Endothelial cell of umbilical vein (primary cell): ENCODE measurements at regions of chr2 and their contacts with region 1.

Region 1: DNA sequence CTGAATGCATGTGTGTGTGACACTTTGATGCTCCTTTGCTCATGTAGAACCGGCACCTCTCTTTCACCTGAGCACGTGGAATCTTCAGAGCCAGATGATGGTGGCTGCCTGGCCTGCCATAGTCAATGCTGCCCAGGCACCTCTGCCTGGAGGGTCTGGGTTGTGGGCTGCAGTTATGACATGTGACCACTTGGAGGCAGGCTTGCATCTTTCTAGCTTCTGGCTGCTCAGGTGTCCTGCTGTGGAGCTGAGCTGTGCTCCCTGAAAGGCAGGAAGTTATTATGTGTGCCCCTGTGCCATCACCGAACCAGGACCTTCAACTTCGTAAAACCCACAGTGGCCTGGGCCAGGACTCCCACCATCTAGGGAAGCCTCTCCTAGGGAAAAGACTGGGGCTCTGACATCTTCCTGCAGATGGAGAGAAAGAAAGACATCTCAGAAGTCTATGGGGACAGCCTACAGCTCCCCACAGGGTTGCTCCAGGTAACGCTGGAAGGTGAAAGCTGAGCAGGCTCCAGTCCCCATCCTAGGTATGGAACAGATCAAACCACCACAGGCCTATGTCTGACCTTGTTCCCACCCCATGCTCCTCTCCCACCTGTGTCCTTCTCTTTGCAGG is 30.2 kb downstream of the PSD4 start:
- DNase-seq: peak; percentile 64
- H3K4me3 ChIP-seq: no peak overlapping the region
- H3K27ac ChIP-seq: no peak overlapping the region
- H3K4me1 ChIP-seq: peaks cover 2% of the 10 kb centered on the region
- H3K27me3 ChIP-seq: no peaks in the 10 kb centered on the region
- CTCF ChIP-seq: peak; percentile 81 to 88
- POLR2A ChIP-seq: no peak

Region 2: DNA sequence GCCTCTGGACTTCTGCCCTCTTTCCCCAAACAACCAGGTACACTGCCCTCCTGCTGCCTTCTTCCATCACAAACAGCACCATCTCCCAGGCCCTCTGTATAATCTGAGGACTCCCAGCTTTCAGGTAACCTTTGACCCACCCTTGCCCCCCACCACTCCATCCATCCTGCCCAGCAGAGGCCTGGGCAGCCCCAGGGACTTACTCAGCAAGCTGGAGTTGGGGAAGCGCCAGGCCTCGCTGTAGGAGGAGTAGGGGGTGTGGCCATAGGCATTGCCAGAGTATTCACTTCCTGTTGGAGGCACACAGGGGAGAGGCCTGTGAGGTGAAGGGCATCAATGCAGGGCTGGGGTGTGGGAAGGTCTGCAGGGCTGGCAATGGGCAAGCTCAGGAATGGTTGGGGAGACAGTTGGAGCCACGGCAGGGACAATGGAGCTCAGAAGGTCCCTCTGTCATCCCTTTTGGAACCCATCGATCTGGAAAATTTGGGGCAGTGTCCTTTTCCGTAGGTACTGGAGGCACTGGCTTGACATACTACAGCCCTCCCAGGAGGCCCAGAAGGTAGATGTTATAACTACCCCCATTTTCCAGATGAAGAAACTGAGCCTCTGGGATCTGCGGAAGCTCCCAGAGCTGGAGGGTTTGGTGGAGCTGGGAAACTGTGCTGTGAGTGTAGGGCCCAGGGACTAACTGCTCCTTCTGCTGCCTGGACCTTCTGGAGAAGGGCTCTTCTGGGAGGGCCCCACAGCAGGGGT is 16.1 kb after region 1 on chr2:
- CTCF ChIA-PET with region 1: interaction called, 122 read pairs
- POLR2A ChIA-PET with region 1: no interaction called
- dilution Hi-C with region 1: no loop called
- intact Hi-C with region 1: no loop called
- DNase-seq: no peak
- H3K4me3 ChIP-seq: no peak overlapping the region
- H3K27ac ChIP-seq: no peak overlapping the region
- H3K4me1 ChIP-seq: peaks cover 16% of the 10 kb centered on the region
- H3K27me3 ChIP-seq: peaks cover 0 to 5% of the 10 kb centered on the region in 2 experiments
- CTCF ChIP-seq: no peak
- POLR2A ChIP-seq: no peak

Region 3: DNA sequence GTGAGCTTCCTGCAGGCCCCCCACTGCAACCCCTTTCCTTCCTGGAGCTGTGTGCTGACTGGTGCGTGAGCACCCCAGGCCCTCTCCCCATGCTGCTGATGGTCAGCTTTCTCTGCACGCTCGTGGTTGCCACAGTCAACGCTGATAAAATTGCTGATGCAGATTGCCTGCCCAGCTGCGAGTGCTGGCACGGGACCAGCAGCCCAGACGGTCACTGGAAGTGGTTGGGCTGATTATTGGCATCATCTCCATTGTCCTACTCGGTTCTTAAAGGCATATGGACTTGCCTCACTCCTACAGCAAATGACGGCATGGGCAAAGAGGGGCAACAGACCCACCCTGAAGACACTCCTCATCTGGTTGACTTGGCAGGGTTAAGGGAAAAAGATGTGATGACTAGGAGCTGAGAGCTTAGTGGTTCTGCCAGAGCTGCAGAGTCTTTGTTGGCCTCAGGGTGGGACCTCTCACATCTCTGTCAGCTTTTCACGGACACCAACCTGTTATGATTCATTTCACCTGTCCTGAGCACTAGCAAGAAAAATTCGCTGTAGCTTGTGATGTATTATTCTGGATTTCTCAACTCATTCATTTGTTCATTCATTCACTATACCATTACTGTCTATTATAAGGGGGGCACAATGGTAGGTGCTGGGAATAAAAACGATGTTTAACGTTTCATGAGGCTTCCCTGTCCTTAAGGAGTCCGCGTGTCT is 36.3 kb after region 1 on chr2:
- CTCF ChIA-PET with region 1: interaction called, 109 read pairs
- POLR2A ChIA-PET with region 1: interaction called, 3 read pairs
- dilution Hi-C with region 1: no loop called
- intact Hi-C with region 1: loop called (anchors 1 kb)
- DNase-seq: peak; percentile 89
- H3K4me3 ChIP-seq: no peak overlapping the region
- H3K27ac ChIP-seq: peak overlapping the region; percentile 32
- H3K4me1 ChIP-seq: peaks cover 19% of the 10 kb centered on the region
- H3K27me3 ChIP-seq: no peaks in the 10 kb centered on the region
- CTCF ChIP-seq: no peak
- POLR2A ChIP-seq: no peak

Region 4: DNA sequence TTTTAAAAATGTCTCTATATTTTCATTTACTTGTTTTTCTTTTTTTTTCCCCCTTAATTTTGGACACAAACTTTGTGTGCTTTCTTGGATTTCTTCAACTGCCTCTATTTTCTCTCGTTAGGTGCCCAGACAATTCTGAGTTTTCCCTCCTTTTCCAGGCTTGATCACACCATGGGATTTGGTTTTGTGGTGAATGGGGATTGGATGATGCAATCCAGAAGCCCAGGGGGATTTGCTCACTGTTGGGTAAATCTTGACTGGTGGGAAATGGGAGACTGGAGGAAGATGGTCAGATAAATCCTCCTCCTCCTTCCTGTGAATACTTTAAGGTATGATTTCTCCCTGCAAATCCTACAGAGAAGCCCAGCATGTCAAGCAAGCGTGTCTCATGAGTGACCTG is 94.2 kb after region 1 on chr2:
- CTCF ChIA-PET with region 1: interaction called, 11 read pairs
- POLR2A ChIA-PET with region 1: no interaction called
- dilution Hi-C with region 1: no loop called
- intact Hi-C with region 1: no loop called
- DNase-seq: no peak
- H3K4me3 ChIP-seq: no peak overlapping the region
- H3K27ac ChIP-seq: no peak overlapping the region
- H3K4me1 ChIP-seq: no peaks in the 10 kb centered on the region
- H3K27me3 ChIP-seq: peaks cover 0 to 9% of the 10 kb centered on the region in 2 experiments
- CTCF ChIP-seq: no peak
- POLR2A ChIP-seq: no peak

Region 5: DNA sequence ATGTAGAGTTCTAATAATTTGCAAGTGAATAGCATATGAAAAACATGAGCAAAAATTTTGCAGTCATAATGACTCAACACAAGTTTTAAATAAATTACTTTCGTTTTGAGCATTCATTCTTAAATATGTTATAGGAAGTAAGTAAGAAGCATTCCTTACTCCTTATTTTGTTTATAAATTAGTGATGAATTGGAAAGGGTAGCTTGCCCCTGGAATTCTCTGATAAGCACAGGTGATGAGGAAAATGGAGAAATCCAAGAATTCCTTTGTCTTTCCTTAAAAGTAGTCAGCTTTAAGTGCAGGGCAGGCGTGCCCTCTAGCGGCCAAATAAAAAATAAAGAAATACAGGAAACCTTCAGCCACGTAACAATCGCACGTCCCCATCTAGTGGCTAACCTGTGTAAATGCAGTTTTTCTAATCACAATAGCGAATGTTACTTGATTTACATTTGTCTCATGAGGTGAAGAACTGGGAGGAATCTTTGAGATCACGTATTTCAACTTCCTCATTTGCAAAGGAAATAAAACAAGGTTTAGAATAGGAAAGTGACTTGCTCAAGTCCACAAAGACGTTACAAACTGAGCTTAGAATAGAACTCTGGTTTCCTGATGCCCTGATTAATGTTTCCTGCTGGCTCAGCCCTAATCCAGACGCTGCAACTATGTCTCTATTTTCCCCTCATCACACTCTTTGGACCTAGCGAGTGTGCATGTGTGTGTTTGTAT is 186.3 kb after region 1 on chr2:
- CTCF ChIA-PET with region 1: interaction called, 37 read pairs
- POLR2A ChIA-PET with region 1: no interaction called
- dilution Hi-C with region 1: no loop called
- intact Hi-C with region 1: loop called (anchors 1 kb)
- DNase-seq: peak; percentile 90
- H3K4me3 ChIP-seq: no peak overlapping the region
- H3K27ac ChIP-seq: no peak overlapping the region
- H3K4me1 ChIP-seq: no peaks in the 10 kb centered on the region
- H3K27me3 ChIP-seq: peaks cover 2 to 6% of the 10 kb centered on the region in 2 experiments
- CTCF ChIP-seq: peak; percentile 57 to 80
- POLR2A ChIP-seq: no peak

Region 6: GRCh38 chr2:113406114-113406513 is 202.1 kb after region 1 on chr2:
- CTCF ChIA-PET with region 1: no interaction called
- POLR2A ChIA-PET with region 1: no interaction called
- dilution Hi-C with region 1: no loop called
- intact Hi-C with region 1: no loop called
- DNase-seq: no peak
- H3K4me3 ChIP-seq: no peak overlapping the region
- H3K27ac ChIP-seq: no peak overlapping the region
- H3K4me1 ChIP-seq: no peaks in the 10 kb centered on the region
- H3K27me3 ChIP-seq: peaks cover 5 to 8% of the 10 kb centered on the region in 2 experiments
- CTCF ChIP-seq: no peak
- POLR2A ChIP-seq: no peak